ENCODE measurements at regions of chr2 and their contacts with region 1.

Region 1: GRCh38 chr2:17995593-17995992 is 117.1 kb downstream of the KCNS3 start:
- DNase-seq: no peak
- ATAC-seq: no peak
- H3K4me3 ChIP-seq: no peak overlapping the region
- H3K27ac ChIP-seq: no peak overlapping the region
- H3K4me1 ChIP-seq: no peaks in the 10 kb centered on the region
- H3K27me3 ChIP-seq: no peaks in the 10 kb centered on the region
- CTCF ChIP-seq: no peak

Region 2: GRCh38 chr2:17682098-17682857 is 313.3 kb before region 1 on chr2:
- intact Hi-C with region 1: no loop called
- DNase-seq: no peak
- ATAC-seq: peak in 5 of 8 donors; percentile 42 to 75 (median 62)
- H3K4me3 ChIP-seq: no peak overlapping the region
- H3K27ac ChIP-seq: no peak overlapping the region
- H3K4me1 ChIP-seq: peaks cover 0 to 14% (median 0%) of the 10 kb centered on the region in 9 donors
- H3K27me3 ChIP-seq: no peaks in the 10 kb centered on the region
- CTCF ChIP-seq: no peak

Region 3: DNA sequence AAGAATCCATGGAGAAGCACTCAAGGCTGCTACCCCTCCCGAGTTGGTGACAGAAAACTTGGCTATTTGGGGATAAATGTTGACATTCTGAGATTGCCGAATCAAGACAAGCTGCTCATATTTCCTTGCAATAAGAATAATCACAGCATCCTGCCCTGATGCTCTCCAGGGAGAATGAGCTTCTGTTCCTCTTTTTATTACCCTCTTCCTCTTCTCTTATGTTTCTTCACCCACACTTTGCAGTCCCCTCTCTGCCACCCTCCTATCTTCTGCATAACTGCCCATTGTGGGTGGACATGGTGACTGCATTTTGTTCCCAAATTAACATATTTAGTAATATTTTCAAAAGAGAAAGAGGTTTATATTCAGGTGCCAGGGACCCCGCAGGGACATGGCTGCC is 191.2 kb before region 1 on chr2:
- intact Hi-C with region 1: no loop called
- DNase-seq: no peak
- ATAC-seq: no peak
- H3K4me3 ChIP-seq: no peak overlapping the region
- H3K27ac ChIP-seq: peak overlapping the region in 1 of 10 donors; percentile 7
- H3K4me1 ChIP-seq: peaks cover 0 to 19% (median 12%) of the 10 kb centered on the region in 9 donors
- H3K27me3 ChIP-seq: no peaks in the 10 kb centered on the region
- CTCF ChIP-seq: no peak

Region 4: GRCh38 chr2:17940091-17940630 is 55.4 kb before region 1 on chr2:
- intact Hi-C with region 1: loop called in 1 of 10 experiments (anchors 5 kb)
- DNase-seq: no peak
- ATAC-seq: no peak
- H3K4me3 ChIP-seq: no peak overlapping the region
- H3K27ac ChIP-seq: no peak overlapping the region
- H3K4me1 ChIP-seq: no peaks in the 10 kb centered on the region
- H3K27me3 ChIP-seq: no peaks in the 10 kb centered on the region
- CTCF ChIP-seq: no peak